Mammary epithelial cell (primary cell): ENCODE measurements at regions of chr17 and their contacts with region 1.

Region 1: GRCh38 chr17:48593840-48594537 is 410 bp upstream of the HOXB5 start:
- DNase-seq: peak; percentile 65
- H3K4me3 ChIP-seq: peak overlapping the region in 1 of 3 experiments; percentile 46
- H3K27ac ChIP-seq: no peak overlapping the region
- H3K4me1 ChIP-seq: peaks cover 32% of the 10 kb centered on the region
- H3K27me3 ChIP-seq: peaks cover 12% of the 10 kb centered on the region
- CTCF ChIP-seq: peak; percentile 80 to 91

Region 2: GRCh38 chr17:48215583-48216139 is 378.3 kb before region 1 on chr17:
- CTCF ChIA-PET with region 1: no interaction called
- dilution Hi-C with region 1: no loop called
- in situ Hi-C with region 1: loop called in 1 of 2 experiments (anchors 10 kb)
- intact Hi-C with region 1: loop called (anchors 2 kb)
- DNase-seq: peak; percentile 31
- H3K4me3 ChIP-seq: no peak overlapping the region
- H3K27ac ChIP-seq: no peak overlapping the region
- H3K4me1 ChIP-seq: no peaks in the 10 kb centered on the region
- H3K27me3 ChIP-seq: no peaks in the 10 kb centered on the region
- CTCF ChIP-seq: peak; percentile 66 to 81

Region 3: DNA sequence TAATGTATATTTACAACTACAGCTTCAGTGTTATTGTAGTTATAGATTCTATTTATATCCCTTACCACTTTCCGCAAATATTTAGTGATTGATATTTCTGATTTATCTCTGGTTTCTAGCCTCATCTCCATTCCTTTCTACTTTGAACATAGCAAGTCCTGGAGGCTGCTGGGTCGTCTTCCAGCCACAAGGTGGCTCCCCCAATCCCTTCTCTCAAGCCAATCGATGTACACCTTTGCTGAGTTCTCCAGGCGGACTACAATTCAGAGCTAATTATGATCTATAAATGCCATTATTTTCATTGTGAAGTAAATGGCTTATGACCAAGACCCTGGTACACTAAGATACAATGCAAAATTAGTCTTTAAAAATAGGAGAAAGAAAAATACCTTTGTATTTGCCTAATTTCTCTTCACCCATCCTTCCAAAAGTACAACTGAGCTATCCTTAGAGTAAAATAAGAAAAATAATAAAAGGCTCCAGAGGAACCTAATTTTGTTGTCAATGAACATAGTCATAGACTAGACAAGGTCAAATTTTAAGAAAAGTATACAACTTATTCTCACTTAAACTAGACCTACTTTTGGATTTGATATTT is 286.1 kb before region 1 on chr17:
- CTCF ChIA-PET with region 1: no interaction called
- dilution Hi-C with region 1: no loop called
- in situ Hi-C with region 1: no loop called
- intact Hi-C with region 1: loop called (anchors 1 kb)
- DNase-seq: peak; percentile 37
- H3K4me3 ChIP-seq: no peak overlapping the region
- H3K27ac ChIP-seq: no peak overlapping the region
- H3K4me1 ChIP-seq: no peaks in the 10 kb centered on the region
- H3K27me3 ChIP-seq: peaks cover 20% of the 10 kb centered on the region
- CTCF ChIP-seq: peak; percentile 91 to 96

Region 4: GRCh38 chr17:48351831-48352332 is 242.1 kb before region 1 on chr17:
- CTCF ChIA-PET with region 1: no interaction called
- dilution Hi-C with region 1: no loop called
- in situ Hi-C with region 1: no loop called
- intact Hi-C with region 1: loop called (anchors 2 kb)
- DNase-seq: peak; percentile 16
- H3K4me3 ChIP-seq: no peak overlapping the region
- H3K27ac ChIP-seq: no peak overlapping the region
- H3K4me1 ChIP-seq: peaks cover 3% of the 10 kb centered on the region
- H3K27me3 ChIP-seq: peaks cover 3% of the 10 kb centered on the region
- CTCF ChIP-seq: peak; percentile 51 to 68